Prostate gland (tissue), 2 donors: ENCODE measurements at regions of chr20 and their contacts with region 1.

Region 1: GRCh38 chr20:40689943-40690835 is 1.2 kb upstream of the MAFB start:
- DNase-seq: peak; percentile 91
- H3K4me3 ChIP-seq: peak overlapping the region; percentile 67 to 74
- H3K27ac ChIP-seq: peak overlapping the region; percentile 94 to 96
- H3K4me1 ChIP-seq: no peaks in the 10 kb centered on the region
- H3K27me3 ChIP-seq: no peaks in the 10 kb centered on the region
- CTCF ChIP-seq: peak; percentile 88 to 96 (median 92)
- POLR2A ChIP-seq: no peak

Region 2: DNA sequence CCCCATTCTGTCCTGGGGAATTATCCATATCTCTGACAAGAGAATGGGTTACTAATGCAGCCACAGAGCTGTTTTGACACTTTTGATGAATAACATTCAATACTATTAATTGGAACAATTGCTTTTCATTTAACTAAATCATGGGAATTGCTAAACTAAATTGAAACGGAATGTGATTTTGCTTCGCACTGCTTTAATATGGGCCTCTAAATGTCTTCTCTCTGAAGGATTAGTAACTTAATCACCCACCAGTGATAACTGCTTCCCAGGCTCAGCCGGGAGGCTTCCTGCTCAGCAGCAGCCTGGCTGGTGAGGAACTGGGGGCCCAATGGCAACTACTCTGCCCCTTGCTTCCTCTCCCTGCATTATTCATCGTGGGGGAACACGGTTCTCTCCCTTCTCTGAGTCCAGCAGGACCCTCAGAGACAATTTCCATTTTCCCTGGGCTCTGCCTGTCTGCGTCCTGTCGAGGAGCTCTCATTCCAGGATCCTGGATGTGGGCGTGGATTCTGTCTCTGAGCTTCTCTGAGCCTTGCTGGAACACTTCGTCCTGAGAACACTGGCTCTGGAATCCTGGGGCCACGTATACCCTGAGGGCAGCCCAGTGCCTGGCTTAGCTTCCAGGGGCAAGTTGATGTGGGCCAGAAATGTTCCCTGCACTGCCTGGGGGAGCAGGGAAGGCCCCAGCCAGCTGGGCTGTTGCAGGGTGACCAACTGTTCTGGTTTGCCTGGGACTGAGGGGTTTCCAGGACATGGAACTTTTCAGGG is 1419.2 kb before region 1 on chr20:
- intact Hi-C with region 1: loop called (anchors 5 kb)
- DNase-seq: no peak
- H3K4me3 ChIP-seq: no peak overlapping the region
- H3K27ac ChIP-seq: no peak overlapping the region
- H3K4me1 ChIP-seq: no peaks in the 10 kb centered on the region
- H3K27me3 ChIP-seq: no peaks in the 10 kb centered on the region
- CTCF ChIP-seq: no peak
- POLR2A ChIP-seq: no peak

Region 3: GRCh38 chr20:39885975-39886649 is 804.1 kb before region 1 on chr20:
- intact Hi-C with region 1: loop called (anchors 5 kb)
- DNase-seq: peak; percentile 42
- H3K4me3 ChIP-seq: no peak overlapping the region
- H3K27ac ChIP-seq: no peak overlapping the region
- H3K4me1 ChIP-seq: no peaks in the 10 kb centered on the region
- H3K27me3 ChIP-seq: no peaks in the 10 kb centered on the region
- CTCF ChIP-seq: peak in 3 of 4 experiments; percentile 42 to 62 (median 55)
- POLR2A ChIP-seq: no peak

Region 4: DNA sequence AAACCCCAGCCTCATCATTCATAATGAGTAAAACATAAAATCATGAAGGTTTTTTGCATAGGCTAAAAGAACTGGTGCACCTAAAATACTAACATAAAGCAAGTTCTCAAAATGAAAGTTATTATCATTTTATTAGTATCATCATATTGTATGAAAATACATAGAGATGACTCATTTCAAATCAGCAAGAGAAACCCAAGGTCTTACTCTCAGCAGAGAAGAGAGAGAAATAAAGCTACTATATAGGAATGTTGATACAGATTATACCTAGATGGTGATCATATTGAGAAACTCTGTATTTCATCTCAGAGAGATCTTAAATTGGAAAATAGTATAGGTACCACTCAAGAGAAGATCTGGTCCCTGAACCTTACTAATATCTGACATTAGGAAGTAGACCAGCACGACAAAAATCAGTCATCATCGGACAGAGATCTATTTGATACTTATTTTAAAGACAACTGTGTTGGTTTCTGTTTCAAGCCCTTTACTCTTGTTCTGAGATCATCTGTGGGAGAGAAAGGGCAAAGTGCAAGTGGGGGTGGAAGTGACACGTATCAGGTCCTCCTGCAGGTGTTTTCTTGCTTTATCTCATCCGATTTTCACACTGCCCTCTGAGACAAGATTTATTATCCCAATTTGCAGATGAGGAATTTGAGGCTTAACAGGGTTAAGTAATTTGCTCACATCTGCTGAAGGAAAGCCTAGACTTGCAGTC is 533.4 kb before region 1 on chr20:
- intact Hi-C with region 1: loop called (anchors 10 kb)
- DNase-seq: no peak
- H3K4me3 ChIP-seq: no peak overlapping the region
- H3K27ac ChIP-seq: no peak overlapping the region
- H3K4me1 ChIP-seq: no peaks in the 10 kb centered on the region
- H3K27me3 ChIP-seq: no peaks in the 10 kb centered on the region
- CTCF ChIP-seq: no peak
- POLR2A ChIP-seq: no peak

Region 5: DNA sequence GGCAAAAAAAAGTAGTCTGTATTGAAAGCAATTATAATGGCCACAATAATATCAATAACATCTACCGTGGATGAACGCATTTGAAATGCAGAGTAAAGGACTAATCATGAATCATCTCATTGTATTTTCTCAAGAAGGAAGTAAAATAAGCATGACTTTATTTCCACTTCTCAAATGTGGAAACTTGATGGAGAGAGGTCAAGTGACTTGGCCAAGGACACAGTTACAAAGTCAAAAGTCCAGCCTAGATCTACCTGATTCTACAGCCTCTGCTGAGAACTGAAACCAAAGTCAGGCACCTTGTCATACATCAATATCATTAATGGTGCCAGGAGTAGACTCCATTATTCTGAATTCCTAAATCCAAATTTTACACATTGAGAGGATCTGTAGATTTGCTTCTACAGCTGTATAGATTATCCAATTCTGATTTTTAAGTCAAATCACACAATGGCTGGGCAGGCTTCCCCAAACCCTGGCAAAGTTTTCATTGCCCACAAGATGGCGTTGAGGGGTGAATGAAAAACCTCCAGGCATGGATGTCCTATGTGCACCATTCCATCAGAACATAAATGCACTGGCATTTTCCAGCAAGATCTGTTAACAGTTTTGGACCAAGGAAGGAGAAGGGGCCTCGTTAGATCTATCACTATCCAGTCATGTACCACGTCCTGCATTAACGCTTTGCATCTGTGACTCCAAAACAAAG is 424.2 kb before region 1 on chr20:
- intact Hi-C with region 1: loop called (anchors 10 kb)
- DNase-seq: peak; percentile 38
- H3K4me3 ChIP-seq: no peak overlapping the region
- H3K27ac ChIP-seq: no peak overlapping the region
- H3K4me1 ChIP-seq: no peaks in the 10 kb centered on the region
- H3K27me3 ChIP-seq: no peaks in the 10 kb centered on the region
- CTCF ChIP-seq: peak in 3 of 4 experiments; percentile 31 to 59 (median 54)
- POLR2A ChIP-seq: no peak

Region 6: DNA sequence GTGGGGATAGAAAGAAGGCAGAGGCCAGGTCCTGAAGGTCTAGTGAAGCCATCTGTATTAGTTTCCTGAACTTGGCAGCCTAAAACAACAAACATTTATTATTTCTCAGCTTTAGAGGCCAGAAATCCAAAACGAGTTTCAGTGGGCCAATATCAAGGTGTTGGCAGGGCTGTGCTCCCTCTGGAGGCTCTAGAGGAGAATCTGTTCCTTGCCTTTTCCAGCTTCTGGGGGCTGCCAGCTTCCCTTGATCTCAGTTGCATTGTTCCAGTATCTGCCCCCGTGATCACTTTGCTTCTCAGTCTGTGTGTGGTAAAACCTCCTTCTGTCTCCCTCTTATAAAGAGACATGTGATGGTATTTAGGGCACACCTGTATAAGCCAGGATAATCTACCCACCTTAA is 83.5 kb before region 1 on chr20:
- intact Hi-C with region 1: no loop called
- DNase-seq: no peak
- H3K4me3 ChIP-seq: no peak overlapping the region
- H3K27ac ChIP-seq: no peak overlapping the region
- H3K4me1 ChIP-seq: no peaks in the 10 kb centered on the region
- H3K27me3 ChIP-seq: no peaks in the 10 kb centered on the region
- CTCF ChIP-seq: no peak
- POLR2A ChIP-seq: no peak